Dendritic cell treated with granulocyte-macrophage colony-stimulating factor and Interleukin-4, amounts not matched to agents 40 ng/mL and 50 ng/mL, for 4 days (primary cell): ENCODE measurements at regions of chr20 and their contacts with region 1.

Region 1: DNA sequence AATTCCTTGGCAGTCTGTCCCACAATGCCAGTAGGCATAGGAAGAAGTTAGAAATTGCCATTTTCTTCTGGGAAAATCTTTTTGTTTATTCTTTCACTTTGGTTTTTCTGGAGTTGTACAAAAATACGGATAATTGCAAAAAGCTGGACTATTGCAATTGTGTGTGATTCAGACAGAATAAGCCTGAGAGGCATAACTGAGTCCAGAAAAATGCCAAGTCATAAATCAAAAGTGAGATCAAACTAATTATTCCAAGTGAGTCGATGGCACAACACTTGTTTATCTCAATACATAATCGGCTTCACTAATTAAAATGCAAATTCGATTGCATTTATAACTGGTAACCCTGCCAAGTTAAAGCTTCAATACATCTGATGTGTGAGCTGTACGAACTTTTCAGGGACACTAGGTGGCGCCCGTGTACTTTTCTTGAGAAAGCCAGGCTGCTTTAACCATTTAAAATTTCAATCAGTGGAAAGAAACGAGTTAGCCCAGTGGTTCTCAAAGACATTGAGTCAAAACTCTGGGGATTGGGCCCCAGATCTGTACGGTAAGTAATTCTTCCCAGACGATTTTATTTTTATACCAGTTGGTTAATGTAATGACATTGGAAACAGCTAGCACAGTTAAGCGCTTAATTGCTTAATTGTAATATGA is 102.6 kb downstream of the LAMP5 start:
- H3K4me3 Mint-ChIP-seq: no peak overlapping the region
- H3K27ac Mint-ChIP-seq: no peak overlapping the region
- H3K4me1 Mint-ChIP-seq: peaks cover 38% of the 10 kb centered on the region
- H3K27me3 Mint-ChIP-seq: peaks cover 53% of the 10 kb centered on the region

Region 2: DNA sequence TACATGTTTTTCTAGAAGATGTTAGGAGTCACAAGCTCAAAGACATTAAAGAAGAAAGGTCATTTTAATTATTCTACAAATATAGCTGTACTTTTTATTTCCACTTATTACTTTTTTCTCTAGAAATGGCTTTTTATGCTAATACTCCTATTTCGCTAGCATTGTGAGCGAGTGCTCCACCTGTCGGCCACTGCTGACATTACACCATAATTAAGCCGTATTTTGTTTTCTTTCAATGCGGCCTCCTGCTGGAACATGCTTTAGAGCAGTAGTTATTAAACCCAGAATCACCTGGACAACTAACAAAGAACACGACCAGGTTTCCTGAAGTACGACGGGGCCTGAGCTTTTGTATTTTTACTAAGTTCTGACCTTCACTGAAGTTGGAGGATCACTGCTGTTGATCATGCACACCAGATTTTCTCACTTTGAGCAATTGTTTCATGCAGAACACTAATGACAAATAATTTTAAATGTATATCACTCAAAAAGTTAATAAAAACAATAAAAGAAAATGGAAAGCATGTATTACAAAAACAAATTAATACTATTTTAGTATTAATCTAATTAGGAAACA is 296.0 kb after region 1 on chr20:
- intact Hi-C with region 1: loop called (anchors 2 kb)
- H3K4me3 Mint-ChIP-seq: no peak overlapping the region
- H3K27ac Mint-ChIP-seq: no peak overlapping the region
- H3K4me1 Mint-ChIP-seq: peaks cover 42% of the 10 kb centered on the region
- H3K27me3 Mint-ChIP-seq: peaks cover 18% of the 10 kb centered on the region

Region 3: DNA sequence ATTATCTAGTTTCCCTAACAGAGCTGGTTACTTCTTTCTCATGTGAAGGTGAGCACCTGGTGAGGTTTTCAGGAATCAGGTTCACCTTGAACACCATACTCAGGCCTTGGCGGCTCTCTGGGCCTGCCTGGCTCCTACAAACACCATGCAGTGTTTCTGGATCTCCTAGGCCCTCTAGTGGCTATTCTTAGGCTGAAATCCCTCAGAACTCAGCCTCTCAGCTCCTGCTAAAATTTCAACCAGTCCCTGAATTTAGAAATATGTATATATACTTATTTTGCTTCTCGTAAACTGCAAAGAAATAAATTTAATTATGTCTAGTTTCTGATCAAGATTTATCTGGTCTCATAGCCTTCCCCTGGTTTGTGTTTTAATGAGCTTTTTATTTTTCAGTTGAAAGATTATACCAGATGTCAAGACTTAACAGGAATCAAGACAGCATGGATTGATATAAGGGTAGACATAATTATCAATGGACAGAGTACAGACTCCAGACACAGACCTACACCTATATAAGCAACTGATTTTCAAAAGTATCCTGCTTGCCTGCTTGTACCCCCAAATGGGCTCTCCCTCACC is 473.7 kb after region 1 on chr20:
- intact Hi-C with region 1: loop called (anchors 1 kb)
- H3K4me3 Mint-ChIP-seq: no peak overlapping the region
- H3K27ac Mint-ChIP-seq: no peak overlapping the region
- H3K4me1 Mint-ChIP-seq: peaks cover 18% of the 10 kb centered on the region
- H3K27me3 Mint-ChIP-seq: peaks cover 5% of the 10 kb centered on the region

Region 4: GRCh38 chr20:10427060-10427692 is 810.2 kb after region 1 on chr20:
- intact Hi-C with region 1: loop called (anchors 2 kb)
- H3K4me3 Mint-ChIP-seq: no peak overlapping the region
- H3K27ac Mint-ChIP-seq: peak overlapping the region; percentile 4
- H3K4me1 Mint-ChIP-seq: peaks cover 73% of the 10 kb centered on the region
- H3K27me3 Mint-ChIP-seq: no peaks in the 10 kb centered on the region

Region 5: DNA sequence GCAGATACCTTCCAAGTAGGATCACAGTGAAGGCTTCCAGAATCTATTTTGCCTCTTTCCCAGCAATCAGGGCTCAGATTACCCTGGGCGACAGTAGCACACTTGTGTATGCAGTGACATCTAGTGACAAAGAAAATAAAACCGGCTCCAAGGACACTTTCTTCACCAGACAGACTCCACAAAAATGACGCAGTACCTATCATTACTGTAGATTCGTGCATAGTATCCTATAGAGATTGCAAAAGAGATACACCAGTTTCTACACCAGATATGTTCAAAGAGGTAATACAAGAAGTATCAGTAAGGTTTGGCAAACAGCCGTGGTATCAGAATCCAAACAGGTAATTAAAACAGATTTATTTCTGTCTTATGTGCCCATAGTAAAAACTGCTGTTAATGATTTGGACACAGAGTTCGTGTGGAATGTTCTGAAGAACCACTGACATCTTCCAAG is 1657.2 kb after region 1 on chr20:
- intact Hi-C with region 1: loop called (anchors 5 kb)
- H3K4me3 Mint-ChIP-seq: no peak overlapping the region
- H3K27ac Mint-ChIP-seq: no peak overlapping the region
- H3K4me1 Mint-ChIP-seq: peaks cover 10% of the 10 kb centered on the region
- H3K27me3 Mint-ChIP-seq: peaks cover 1% of the 10 kb centered on the region

Region 6: GRCh38 chr20:11544029-11544678 is 1927.2 kb after region 1 on chr20:
- intact Hi-C with region 1: loop called (anchors 5 kb)
- H3K4me3 Mint-ChIP-seq: no peak overlapping the region
- H3K27ac Mint-ChIP-seq: no peak overlapping the region
- H3K4me1 Mint-ChIP-seq: no peaks in the 10 kb centered on the region
- H3K27me3 Mint-ChIP-seq: no peaks in the 10 kb centered on the region